ENCODE measurements at regions of chr2 and their contacts with region 1.

Region 1: DNA sequence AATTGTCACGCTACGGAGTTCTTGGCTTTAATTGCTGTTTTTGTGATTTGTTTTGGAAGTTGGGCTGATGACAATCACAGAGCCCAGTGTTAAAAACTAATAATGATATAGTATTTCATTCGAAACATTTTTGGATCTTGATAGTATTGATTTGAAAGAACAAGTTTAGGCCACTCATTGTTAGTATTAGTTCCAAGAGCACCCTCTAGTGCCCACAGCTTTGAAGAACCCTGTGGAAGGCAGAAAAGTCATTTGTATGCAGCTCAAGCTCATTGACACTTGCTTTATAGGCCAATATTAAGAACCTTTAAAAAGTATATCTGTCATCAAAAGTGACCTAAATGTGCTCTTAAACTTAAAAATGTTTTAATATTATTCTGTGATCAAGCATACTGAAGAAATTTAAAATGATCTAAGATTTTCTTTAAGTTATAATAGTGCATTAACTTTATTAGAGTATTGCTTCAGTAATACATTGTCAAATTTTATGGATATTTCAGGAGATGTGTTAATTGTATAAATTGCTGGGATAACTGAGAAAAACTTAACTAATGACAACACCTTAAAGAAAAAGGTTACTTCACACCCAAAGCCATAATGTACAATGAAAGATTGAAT is 191.0 kb downstream of the GRB14 start:
- DNase-seq: no peak
- H3K4me3 ChIP-seq: no peak overlapping the region
- H3K27ac ChIP-seq: no peak overlapping the region
- H3K4me1 ChIP-seq: no peaks in the 10 kb centered on the region
- H3K27me3 ChIP-seq: no peaks in the 10 kb centered on the region
- CTCF ChIP-seq: peak in 2 of 3 experiments; percentile 54 to 68

Region 2: GRCh38 chr2:163191372-163191771 is 1238.9 kb before region 1 on chr2:
- intact Hi-C with region 1: loop called (anchors 5 kb)
- DNase-seq: no peak
- H3K4me3 ChIP-seq: no peak overlapping the region
- H3K27ac ChIP-seq: no peak overlapping the region
- H3K4me1 ChIP-seq: no peaks in the 10 kb centered on the region
- H3K27me3 ChIP-seq: no peaks in the 10 kb centered on the region
- CTCF ChIP-seq: peak; percentile 10 to 63 (median 41)